Mammary epithelial cell (primary cell): ENCODE measurements at regions of chr2 and their contacts with region 1.

Region 1: GRCh38 chr2:102020596-102021181 is 28.9 kb downstream of the IL1R2 start:
- DNase-seq: peak; percentile 71
- H3K4me3 ChIP-seq: no peak overlapping the region
- H3K27ac ChIP-seq: no peak overlapping the region
- H3K4me1 ChIP-seq: peaks cover 22% of the 10 kb centered on the region
- H3K27me3 ChIP-seq: no peaks in the 10 kb centered on the region
- CTCF ChIP-seq: peak; percentile 97 to 99

Region 2: GRCh38 chr2:101873543-101873942 is 147.1 kb before region 1 on chr2:
- CTCF ChIA-PET with region 1: no interaction called
- dilution Hi-C with region 1: no loop called
- in situ Hi-C with region 1: no loop called
- intact Hi-C with region 1: no loop called
- DNase-seq: no peak
- H3K4me3 ChIP-seq: no peak overlapping the region
- H3K27ac ChIP-seq: no peak overlapping the region
- H3K4me1 ChIP-seq: no peaks in the 10 kb centered on the region
- H3K27me3 ChIP-seq: no peaks in the 10 kb centered on the region
- CTCF ChIP-seq: peak in 1 of 2 donors; percentile 27

Region 3: DNA sequence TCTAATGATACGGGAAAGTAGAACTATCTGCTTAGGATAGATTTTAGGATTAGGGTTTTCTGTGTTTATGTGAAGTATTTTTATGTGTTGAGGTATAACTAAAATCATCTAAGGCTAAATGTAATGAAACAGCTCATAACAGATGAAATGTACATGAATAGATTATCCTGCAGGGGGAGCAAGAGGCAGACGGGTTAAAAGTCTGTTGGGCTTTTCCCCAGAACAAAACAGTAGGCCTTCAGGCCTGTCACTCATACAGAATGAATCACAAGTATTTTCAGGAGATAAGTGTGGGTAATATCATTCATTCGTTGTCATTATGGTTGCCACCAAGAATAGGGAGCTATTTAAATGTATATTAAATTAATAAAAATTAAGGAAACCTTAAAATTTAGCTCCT is 136.8 kb before region 1 on chr2:
- CTCF ChIA-PET with region 1: interaction called, 5 read pairs
- dilution Hi-C with region 1: no loop called
- in situ Hi-C with region 1: no loop called
- intact Hi-C with region 1: loop called (anchors 5 kb)
- DNase-seq: peak; percentile 57
- H3K4me3 ChIP-seq: no peak overlapping the region
- H3K27ac ChIP-seq: no peak overlapping the region
- H3K4me1 ChIP-seq: peaks cover 22% of the 10 kb centered on the region
- H3K27me3 ChIP-seq: no peaks in the 10 kb centered on the region
- CTCF ChIP-seq: peak; percentile 67 to 74

Region 4: GRCh38 chr2:102063941-102064678 is 43.4 kb after region 1 on chr2:
- CTCF ChIA-PET with region 1: no interaction called
- dilution Hi-C with region 1: no loop called
- in situ Hi-C with region 1: no loop called
- intact Hi-C with region 1: no loop called
- DNase-seq: peak; percentile 91
- H3K4me3 ChIP-seq: no peak overlapping the region
- H3K27ac ChIP-seq: peak overlapping the region; percentile 80
- H3K4me1 ChIP-seq: peaks cover 36% of the 10 kb centered on the region
- H3K27me3 ChIP-seq: no peaks in the 10 kb centered on the region
- CTCF ChIP-seq: no peak

Region 5: DNA sequence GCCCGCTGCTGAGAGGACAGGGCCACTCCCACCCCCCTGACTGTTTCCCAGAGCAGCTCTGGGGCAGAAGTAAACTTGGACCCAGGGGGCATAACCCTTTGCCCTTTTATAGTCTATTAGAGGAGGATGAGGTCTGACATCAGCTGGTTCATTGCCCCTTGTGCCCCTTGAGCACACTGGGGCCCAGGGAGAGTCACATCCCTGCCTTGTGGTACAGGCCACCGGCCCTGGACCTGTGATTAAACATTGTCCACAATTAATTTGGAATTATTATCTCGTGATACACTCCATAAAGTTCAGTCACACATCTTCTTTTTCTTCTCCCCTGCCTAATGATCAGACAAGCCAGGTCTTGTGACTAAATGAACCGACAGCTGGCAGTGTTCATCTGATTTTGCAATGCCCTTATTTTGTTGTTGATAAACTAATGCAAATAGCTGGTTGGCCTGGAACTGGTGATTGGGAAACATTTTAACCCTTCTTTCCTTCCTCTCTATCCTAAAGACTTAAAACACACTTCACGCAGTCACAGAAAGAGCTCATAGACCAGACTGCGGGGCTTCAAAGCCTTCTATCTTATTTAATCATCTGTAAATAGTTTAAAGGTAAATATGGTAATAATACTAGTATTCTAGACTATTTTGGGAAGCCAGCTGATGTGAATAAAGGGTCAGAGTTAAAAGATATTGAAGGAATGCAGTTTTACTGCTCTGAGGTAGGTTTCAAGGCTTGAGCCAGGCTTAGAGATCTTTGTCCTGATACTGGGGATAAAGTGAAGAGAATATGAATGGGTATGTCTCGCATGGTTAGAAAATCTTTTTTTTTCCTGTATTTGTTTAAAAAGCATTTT is 135.2 kb after region 1 on chr2:
- CTCF ChIA-PET with region 1: no interaction called
- dilution Hi-C with region 1: no loop called
- in situ Hi-C with region 1: loop called in 1 of 2 experiments (anchors 5 kb)
- intact Hi-C with region 1: no loop called
- DNase-seq: peak; percentile 57
- H3K4me3 ChIP-seq: no peak overlapping the region
- H3K27ac ChIP-seq: no peak overlapping the region
- H3K4me1 ChIP-seq: peaks cover 8% of the 10 kb centered on the region
- H3K27me3 ChIP-seq: no peaks in the 10 kb centered on the region
- CTCF ChIP-seq: peak in 1 of 2 donors; percentile 10

Region 6: GRCh38 chr2:102172745-102173144 is 152.1 kb after region 1 on chr2:
- CTCF ChIA-PET with region 1: no interaction called
- dilution Hi-C with region 1: no loop called
- in situ Hi-C with region 1: loop called in 1 of 2 experiments (anchors 10 kb)
- intact Hi-C with region 1: no loop called
- DNase-seq: no peak
- H3K4me3 ChIP-seq: no peak overlapping the region
- H3K27ac ChIP-seq: no peak overlapping the region
- H3K4me1 ChIP-seq: no peaks in the 10 kb centered on the region
- H3K27me3 ChIP-seq: no peaks in the 10 kb centered on the region
- CTCF ChIP-seq: no peak

Region 7: GRCh38 chr2:102240640-102241370 is 220.1 kb after region 1 on chr2:
- CTCF ChIA-PET with region 1: interaction called, 4 read pairs
- dilution Hi-C with region 1: no loop called
- in situ Hi-C with region 1: loop called in 1 of 2 experiments (anchors 10 kb)
- intact Hi-C with region 1: loop called (anchors 1 kb)
- DNase-seq: peak; percentile 77
- H3K4me3 ChIP-seq: no peak overlapping the region
- H3K27ac ChIP-seq: peak overlapping the region; percentile 32
- H3K4me1 ChIP-seq: peaks cover 20% of the 10 kb centered on the region
- H3K27me3 ChIP-seq: no peaks in the 10 kb centered on the region
- CTCF ChIP-seq: peak; percentile 91 to 99

Region 8: GRCh38 chr2:102342891-102343290 is 322.2 kb after region 1 on chr2:
- CTCF ChIA-PET with region 1: no interaction called
- dilution Hi-C with region 1: no loop called
- in situ Hi-C with region 1: no loop called
- intact Hi-C with region 1: loop called (anchors 5 kb)
- DNase-seq: no peak
- H3K4me3 ChIP-seq: no peak overlapping the region
- H3K27ac ChIP-seq: no peak overlapping the region
- H3K4me1 ChIP-seq: no peaks in the 10 kb centered on the region
- H3K27me3 ChIP-seq: no peaks in the 10 kb centered on the region
- CTCF ChIP-seq: peak; percentile 7 to 60

Region 9: DNA sequence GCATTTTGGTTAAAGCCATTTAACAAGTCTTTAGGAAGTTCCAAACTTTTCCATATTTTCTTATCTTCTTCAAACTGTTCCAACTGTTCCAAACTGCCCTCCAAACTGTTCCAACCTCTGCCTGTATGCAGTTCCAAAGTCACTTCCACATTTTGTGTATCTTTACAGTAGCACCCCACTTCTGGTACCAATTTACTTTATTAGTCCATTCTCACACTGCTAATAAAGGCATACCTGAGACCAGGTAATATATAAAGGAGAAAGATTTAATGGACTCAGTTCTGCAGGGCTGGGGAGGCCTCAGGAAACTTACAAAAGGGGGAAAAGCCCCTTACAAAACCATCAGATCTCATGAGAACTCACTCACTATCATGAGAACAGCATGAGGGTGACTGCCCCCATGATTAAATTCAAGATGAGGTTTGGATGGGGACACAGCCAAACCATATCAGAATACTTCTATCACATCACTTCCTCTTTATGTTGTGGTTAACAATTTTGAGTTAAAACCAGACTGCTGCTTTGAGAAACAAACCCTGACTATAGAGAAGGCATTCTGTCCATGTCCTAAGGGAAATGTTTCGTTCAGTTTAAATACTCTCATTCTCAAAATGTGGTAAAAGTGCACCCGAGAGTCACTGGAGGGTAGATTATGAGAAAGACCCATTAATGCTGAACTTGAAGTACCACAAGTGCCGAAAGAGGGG is 345.9 kb after region 1 on chr2:
- CTCF ChIA-PET with region 1: no interaction called
- dilution Hi-C with region 1: no loop called
- in situ Hi-C with region 1: loop called in 1 of 2 experiments (anchors 10 kb)
- intact Hi-C with region 1: no loop called
- DNase-seq: no peak
- H3K4me3 ChIP-seq: no peak overlapping the region
- H3K27ac ChIP-seq: no peak overlapping the region
- H3K4me1 ChIP-seq: no peaks in the 10 kb centered on the region
- H3K27me3 ChIP-seq: no peaks in the 10 kb centered on the region
- CTCF ChIP-seq: no peak